Colonic mucosa (tissue), 4 donors: ENCODE measurements at regions of chr4 and their contacts with region 1.

Region 1: DNA sequence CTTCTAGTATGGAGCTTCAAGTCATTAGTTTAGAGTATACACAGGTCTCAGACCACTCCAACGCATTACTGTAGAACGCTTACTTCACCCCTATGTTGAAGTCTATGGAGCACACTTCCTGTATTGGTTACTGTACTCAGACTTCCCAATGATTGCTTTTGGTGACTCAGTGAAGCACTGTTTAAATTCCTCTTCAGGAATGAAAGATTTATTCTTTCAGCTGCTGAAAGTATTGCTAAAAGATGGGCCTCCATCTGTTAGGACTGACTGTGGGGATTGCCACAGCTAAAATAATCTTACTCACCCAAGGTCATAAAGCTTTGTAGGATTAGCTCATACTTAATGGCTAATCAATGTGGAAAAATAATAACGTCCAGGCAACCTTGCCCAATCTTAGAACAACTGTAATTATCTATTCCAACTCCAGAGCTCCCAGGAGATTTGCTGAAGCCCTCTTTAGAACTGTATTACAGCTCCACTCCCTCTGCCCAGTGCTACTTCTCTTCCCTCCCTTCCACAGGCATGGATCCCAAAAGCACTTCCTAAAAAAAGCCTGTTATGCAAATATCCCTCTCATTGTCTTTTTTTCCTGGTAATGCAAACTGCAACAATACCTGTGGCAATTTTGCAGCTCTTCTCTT is 281.9 kb upstream of the HS3ST1 start:
- DNase-seq: no peak
- H3K4me3 ChIP-seq: no peak overlapping the region
- H3K27ac ChIP-seq: no peak overlapping the region
- H3K4me1 ChIP-seq: no peaks in the 10 kb centered on the region
- H3K27me3 ChIP-seq: no peaks in the 10 kb centered on the region
- CTCF ChIP-seq: no peak

Region 2: GRCh38 chr4:11436673-11437072 is 273.9 kb before region 1 on chr4:
- intact Hi-C with region 1: loop called (anchors 10 kb)
- DNase-seq: no peak
- H3K4me3 ChIP-seq: no peak overlapping the region
- H3K27ac ChIP-seq: no peak overlapping the region
- H3K4me1 ChIP-seq: no peaks in the 10 kb centered on the region
- H3K27me3 ChIP-seq: no peaks in the 10 kb centered on the region
- CTCF ChIP-seq: no peak

Region 3: DNA sequence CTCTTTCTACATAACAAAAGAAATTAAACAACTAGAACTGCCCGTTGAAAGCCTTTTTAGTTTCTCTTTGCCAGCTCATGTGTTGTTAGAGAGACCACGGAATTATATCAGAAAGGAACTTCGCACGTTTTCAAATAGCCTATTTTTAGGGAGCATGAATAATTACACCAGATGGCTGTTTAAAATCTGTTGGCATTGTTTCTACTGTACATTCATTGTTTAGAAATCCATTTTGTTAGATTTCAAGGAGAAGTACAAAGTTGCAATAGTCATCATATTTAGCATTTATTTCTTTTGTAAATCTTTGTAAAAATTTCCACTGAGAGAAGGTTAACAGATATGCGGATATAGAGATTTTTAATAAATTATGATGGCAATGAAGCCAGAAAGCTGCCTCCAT is 121.2 kb after region 1 on chr4:
- intact Hi-C with region 1: no loop called
- DNase-seq: no peak
- H3K4me3 ChIP-seq: no peak overlapping the region
- H3K27ac ChIP-seq: no peak overlapping the region
- H3K4me1 ChIP-seq: no peaks in the 10 kb centered on the region
- H3K27me3 ChIP-seq: no peaks in the 10 kb centered on the region
- CTCF ChIP-seq: no peak